ENCODE measurements at regions of chr1 and their contacts with region 1.

Region 1: DNA sequence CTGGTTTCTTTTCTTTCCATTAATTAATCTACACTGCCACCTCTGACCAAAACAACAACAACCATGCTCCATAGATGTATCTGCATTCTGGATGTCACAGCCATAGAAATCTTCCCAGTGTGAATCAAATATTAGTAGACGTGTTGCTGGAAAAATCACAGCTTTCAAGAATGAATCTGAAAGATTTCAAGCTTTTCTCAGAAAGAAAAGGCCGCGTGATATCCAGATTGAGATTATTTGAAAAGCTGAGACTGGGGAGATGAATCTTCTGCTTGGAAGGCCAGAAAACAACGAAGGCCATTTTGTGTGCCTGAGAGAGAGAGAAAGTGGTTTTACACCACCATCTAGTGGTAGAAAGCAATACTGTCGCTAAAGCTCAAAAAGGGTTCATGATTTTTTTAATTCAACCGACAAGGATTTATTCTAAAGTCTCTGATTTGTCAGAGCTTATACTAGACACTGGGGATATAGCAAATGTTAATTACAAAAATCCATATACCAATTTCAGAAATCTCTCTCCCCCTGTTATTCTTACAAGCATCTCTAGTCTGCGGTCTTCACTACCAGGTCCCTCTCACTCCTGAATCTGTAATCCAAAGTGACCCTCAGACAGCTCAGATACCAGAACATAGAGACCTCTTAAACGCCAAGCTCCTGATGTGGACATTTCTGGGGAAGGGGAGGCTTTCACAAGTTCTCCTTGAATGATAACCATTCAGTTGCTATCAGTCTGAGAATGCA is 87.5 kb upstream of the SGIP1 start:
- DNase-seq: peak; percentile 89
- H3K4me3 ChIP-seq: no peak overlapping the region
- H3K27ac ChIP-seq: peak overlapping the region; percentile 47
- H3K4me1 ChIP-seq: peaks cover 13% of the 10 kb centered on the region
- H3K27me3 ChIP-seq: no peaks in the 10 kb centered on the region
- CTCF ChIP-seq: peak; percentile 51 to 65
- POLR2A ChIP-seq: no peak

Region 2: GRCh38 chr1:65431111-65431705 is 1015.2 kb before region 1 on chr1:
- CTCF ChIA-PET with region 1: interaction called, 3 read pairs
- POLR2A ChIA-PET with region 1: no interaction called
- dilution Hi-C with region 1: no loop called
- intact Hi-C with region 1: loop called (anchors 5 kb)
- DNase-seq: peak; percentile 79
- H3K4me3 ChIP-seq: peak overlapping the region in 1 of 3 experiments; percentile 26
- H3K27ac ChIP-seq: peak overlapping the region; percentile 97
- H3K4me1 ChIP-seq: peaks cover 33% of the 10 kb centered on the region
- H3K27me3 ChIP-seq: no peaks in the 10 kb centered on the region
- CTCF ChIP-seq: peak; percentile 35 to 36
- POLR2A ChIP-seq: no peak

Region 3: GRCh38 chr1:66242646-66243547 is 203.5 kb before region 1 on chr1:
- CTCF ChIA-PET with region 1: interaction called, 186 read pairs
- POLR2A ChIA-PET with region 1: no interaction called
- dilution Hi-C with region 1: no loop called
- intact Hi-C with region 1: no loop called
- DNase-seq: peak; percentile 85
- H3K4me3 ChIP-seq: no peak overlapping the region
- H3K27ac ChIP-seq: peak overlapping the region; percentile 64
- H3K4me1 ChIP-seq: peaks cover 26% of the 10 kb centered on the region
- H3K27me3 ChIP-seq: no peaks in the 10 kb centered on the region
- CTCF ChIP-seq: peak; percentile 98 to 100
- POLR2A ChIP-seq: no peak

Region 4: GRCh38 chr1:66331657-66332547 is 114.5 kb before region 1 on chr1:
- CTCF ChIA-PET with region 1: interaction called, 35 read pairs
- POLR2A ChIA-PET with region 1: no interaction called
- dilution Hi-C with region 1: no loop called
- intact Hi-C with region 1: loop called (anchors 1 kb)
- DNase-seq: peak; percentile 97
- H3K4me3 ChIP-seq: peak overlapping the region; percentile 77 to 98 (median 92)
- H3K27ac ChIP-seq: peak overlapping the region; percentile 95
- H3K4me1 ChIP-seq: peaks cover 30% of the 10 kb centered on the region
- H3K27me3 ChIP-seq: no peaks in the 10 kb centered on the region
- CTCF ChIP-seq: peak; percentile 21 to 57
- POLR2A ChIP-seq: peak; percentile 97

Region 5: GRCh38 chr1:66371233-66372005 is 75.0 kb before region 1 on chr1:
- CTCF ChIA-PET with region 1: interaction called, 35 read pairs
- POLR2A ChIA-PET with region 1: no interaction called
- dilution Hi-C with region 1: no loop called
- intact Hi-C with region 1: loop called (anchors 1 kb)
- DNase-seq: peak; percentile 98
- H3K4me3 ChIP-seq: peak overlapping the region in 1 of 3 experiments; percentile 29
- H3K27ac ChIP-seq: peak overlapping the region; percentile 99
- H3K4me1 ChIP-seq: peaks cover 60% of the 10 kb centered on the region
- H3K27me3 ChIP-seq: no peaks in the 10 kb centered on the region
- CTCF ChIP-seq: no peak
- POLR2A ChIP-seq: no peak

Region 6: GRCh38 chr1:66725885-66726665 is 279.6 kb after region 1 on chr1:
- CTCF ChIA-PET with region 1: interaction called, 39 read pairs
- POLR2A ChIA-PET with region 1: no interaction called
- dilution Hi-C with region 1: no loop called
- intact Hi-C with region 1: loop called (anchors 1 kb)
- DNase-seq: peak; percentile 82
- H3K4me3 ChIP-seq: no peak overlapping the region
- H3K27ac ChIP-seq: no peak overlapping the region
- H3K4me1 ChIP-seq: peaks cover 31% of the 10 kb centered on the region
- H3K27me3 ChIP-seq: no peaks in the 10 kb centered on the region
- CTCF ChIP-seq: peak; percentile 83 to 84
- POLR2A ChIP-seq: no peak

Region 7: GRCh38 chr1:66968574-66968973 is 522.1 kb after region 1 on chr1:
- CTCF ChIA-PET with region 1: no interaction called
- POLR2A ChIA-PET with region 1: no interaction called
- dilution Hi-C with region 1: no loop called
- intact Hi-C with region 1: no loop called
- DNase-seq: no peak
- H3K4me3 ChIP-seq: no peak overlapping the region
- H3K27ac ChIP-seq: no peak overlapping the region
- H3K4me1 ChIP-seq: no peaks in the 10 kb centered on the region
- H3K27me3 ChIP-seq: no peaks in the 10 kb centered on the region
- CTCF ChIP-seq: no peak
- POLR2A ChIP-seq: no peak